GM10248 (cell line): ENCODE measurements at regions of chr11 and their contacts with region 1.

Region 1: DNA sequence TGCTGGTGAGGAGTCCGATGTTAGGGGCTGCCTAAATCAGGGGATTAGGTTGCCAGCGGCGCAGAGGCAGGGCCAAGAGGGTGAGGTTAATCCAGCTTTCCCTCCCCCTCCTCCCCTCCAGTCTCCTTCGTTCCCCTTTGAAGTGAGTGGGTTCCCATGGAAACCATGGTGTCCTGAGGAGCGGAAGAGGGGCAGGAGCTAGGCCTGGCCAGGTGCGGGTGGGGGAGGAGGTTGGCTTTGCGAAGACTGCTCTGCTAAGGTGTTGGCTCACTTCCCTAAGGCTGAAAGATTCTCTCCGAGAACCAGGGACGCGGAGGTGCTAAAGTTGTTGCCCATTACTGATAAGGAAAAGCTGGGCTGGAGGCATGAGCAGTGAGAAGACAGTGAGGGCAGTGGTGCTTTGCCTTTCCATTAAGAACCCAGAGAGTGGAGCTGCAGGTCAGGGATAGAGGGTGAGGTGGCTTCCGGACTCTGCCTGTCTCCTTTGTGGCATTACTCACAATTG is 124.6 kb downstream of the FEZ1 start:
- DNase-seq: no peak
- CTCF ChIP-seq: no peak

Region 2: GRCh38 chr11:125192183-125192582 is 179.3 kb before region 1 on chr11:
- CTCF ChIA-PET with region 1: no interaction called
- POLR2A ChIA-PET with region 1: no interaction called
- DNase-seq: no peak
- CTCF ChIP-seq: no peak

Region 3: DNA sequence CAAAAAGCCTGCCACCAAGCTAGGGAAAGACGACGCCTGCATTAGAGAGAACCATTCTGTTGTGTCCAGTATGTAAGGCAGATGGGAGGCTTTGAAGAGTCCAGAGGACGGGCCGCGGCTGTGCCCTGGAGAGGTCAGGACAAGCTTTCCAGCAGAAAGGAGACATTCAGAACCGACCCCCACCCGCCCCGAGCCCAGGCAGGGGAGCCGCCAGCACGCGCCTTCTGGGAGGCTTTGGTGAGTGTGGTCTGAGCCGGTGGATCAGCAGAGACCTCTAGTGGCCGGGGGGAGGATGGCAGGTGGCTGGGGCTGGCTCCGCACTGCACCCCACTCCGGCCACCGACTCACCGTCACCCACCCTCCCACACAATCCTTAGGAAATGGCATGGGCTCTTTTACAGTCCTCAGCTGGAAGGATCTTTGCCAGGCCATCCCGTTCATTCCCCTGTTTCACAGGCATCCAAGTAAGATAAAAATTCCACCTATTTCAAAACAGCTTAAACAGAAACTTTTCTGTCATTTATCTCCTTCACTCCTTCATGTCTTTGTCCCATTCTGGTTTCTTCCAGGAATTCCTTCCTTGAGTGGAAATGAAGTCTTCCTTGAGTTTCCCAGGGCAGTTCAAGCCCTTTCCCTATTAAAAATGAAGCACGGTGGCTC is 33.4 kb after region 1 on chr11:
- CTCF ChIA-PET with region 1: interaction called, 13 read pairs
- POLR2A ChIA-PET with region 1: no interaction called
- DNase-seq: peak; percentile 86
- CTCF ChIP-seq: peak; percentile 97